Heart left ventricle (tissue), 16 donors: ENCODE measurements at regions of chr22 and their contacts with region 1.

Region 1: DNA sequence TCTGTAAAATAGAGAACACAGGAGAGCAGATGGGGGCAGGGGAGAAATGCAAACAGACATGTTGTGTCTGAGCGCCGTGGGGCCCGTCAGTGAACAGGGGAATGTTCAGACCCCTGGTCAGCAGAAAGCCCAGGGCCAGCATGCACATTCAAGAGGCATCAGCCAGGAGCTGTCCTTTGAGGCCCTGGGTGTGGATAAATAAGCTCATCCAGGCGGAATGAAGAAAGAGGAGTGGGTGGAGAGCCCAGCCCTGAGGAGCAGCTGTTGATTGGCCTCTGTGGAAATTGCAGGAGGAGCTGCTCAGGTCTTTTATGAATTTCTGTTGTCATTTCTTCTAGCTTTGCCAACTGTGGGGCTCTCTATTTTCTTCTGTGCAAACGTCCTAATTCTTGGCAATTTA is 49.7 kb upstream of the CECR2 start:
- DNase-seq: no peak
- ATAC-seq: no peak
- H3K4me3 ChIP-seq: no peak overlapping the region
- H3K27ac ChIP-seq: no peak overlapping the region
- H3K4me1 ChIP-seq: no peaks in the 10 kb centered on the region
- H3K27me3 ChIP-seq: peaks cover 0 to 5% (median 0%) of the 10 kb centered on the region in 9 donors
- CTCF ChIP-seq: no peak
- POLR2A ChIP-seq: no peak

Region 2: DNA sequence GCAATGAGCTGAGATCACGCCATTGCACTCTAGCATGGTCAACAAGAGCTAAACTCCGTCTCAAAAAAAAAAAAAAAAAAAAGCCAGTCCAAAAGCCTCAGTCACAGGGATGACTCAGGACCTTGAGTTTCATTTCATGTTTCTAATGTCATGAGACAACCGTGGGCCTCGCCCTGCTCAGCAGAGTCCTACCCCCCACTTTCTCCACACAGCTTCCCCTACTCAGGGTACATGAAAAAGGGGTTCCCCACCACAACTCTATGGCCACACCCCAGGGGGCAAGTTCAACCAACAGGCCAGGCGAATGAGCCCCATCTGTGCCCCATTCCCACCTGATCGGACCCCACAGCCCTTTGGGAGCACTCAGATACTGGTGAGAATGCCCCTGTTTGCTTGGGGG is 76.0 kb before region 1 on chr22:
- intact Hi-C with region 1: loop called in 1 of 10 experiments (anchors 10 kb)
- DNase-seq: peak in 1 of 5 donors; percentile 47
- ATAC-seq: peak in 3 of 4 donors; percentile 47 to 71 (median 57)
- H3K4me3 ChIP-seq: no peak overlapping the region
- H3K27ac ChIP-seq: peak overlapping the region in 1 of 12 donors; percentile 93
- H3K4me1 ChIP-seq: peaks cover 0 to 26% (median 0%) of the 10 kb centered on the region in 12 donors
- H3K27me3 ChIP-seq: no peaks in the 10 kb centered on the region
- CTCF ChIP-seq: no peak
- POLR2A ChIP-seq: no peak